ENCODE measurements at regions of chr1 and their contacts with region 1.

Region 1: DNA sequence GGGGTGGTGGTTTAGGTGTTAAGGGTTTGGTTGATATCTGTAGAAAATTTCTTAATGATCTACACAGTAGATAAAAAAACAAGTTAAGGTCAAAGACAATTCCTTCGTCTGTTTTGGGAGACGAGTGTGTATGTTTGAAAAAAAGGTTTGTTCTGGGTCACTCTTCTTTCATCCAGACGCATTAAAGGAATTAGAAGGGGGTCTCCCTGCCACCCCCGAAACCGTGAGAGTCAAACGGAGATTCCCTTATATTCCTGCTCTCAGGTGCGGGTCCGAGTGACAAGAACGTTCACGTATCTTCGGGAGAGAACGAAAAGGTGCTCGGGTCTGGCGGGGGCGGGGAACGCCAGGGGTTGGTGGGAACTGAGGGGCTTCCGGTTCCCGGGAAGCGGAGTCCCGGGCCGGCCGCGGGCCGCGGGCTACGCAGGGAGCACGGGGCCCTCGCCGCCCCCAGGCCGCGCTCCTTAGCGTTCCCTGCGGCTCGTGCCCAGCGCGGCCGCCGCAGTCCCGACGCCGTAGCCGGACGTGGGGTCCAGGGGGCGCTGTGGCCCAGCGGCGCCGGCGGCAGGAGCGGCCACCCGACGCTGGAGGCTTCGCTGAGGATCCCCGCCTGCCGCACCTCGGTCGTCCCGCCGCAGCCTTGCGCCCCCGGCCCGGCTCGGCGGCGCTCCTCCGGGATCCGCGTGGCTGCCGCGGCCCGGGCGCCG is at the start of gene ZFYVE9:
- DNase-seq: peak; percentile 88
- CTCF ChIP-seq: peak; percentile 95

Region 2: DNA sequence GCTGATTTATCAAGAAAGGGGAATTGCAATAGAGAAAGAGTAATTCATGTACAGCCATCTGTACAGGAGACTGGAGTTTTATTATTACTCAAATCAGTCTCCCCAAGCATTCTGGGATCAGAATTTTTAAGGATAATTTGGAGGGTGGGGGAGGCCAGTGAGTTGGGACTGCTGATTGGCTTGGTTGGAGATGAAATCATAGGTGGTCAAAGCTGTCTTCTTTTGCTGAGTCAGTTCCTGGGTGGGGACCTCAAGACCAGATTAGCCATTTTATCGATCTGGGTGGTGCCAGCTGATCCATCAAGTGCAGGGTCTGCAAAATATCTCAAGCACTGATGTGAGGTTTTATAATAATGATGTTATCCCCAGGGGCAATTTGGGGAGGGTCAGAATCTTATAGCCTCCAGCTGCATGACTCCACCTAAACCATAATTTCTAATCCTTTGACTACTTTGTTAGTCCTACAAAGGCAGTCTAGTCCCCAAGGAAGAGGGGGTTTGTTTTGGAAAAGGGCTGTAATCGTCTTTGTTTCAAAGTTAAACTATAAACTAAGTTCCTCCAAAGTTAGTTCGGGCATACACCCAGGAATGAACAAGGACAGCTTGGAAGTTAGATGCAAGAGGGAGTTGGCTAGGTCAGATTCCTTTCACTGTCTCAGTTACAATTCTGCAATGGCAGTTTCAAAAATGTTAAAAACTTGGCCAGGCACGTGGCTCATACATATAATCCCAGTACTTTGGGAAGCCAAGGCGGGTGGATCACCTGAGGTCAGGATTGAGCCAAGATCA is 134.3 kb before region 1 on chr1:
- in situ Hi-C with region 1: no loop called
- DNase-seq: no peak
- CTCF ChIP-seq: no peak

Region 3: GRCh38 chr1:52264530-52265115 is 123.0 kb after region 1 on chr1:
- in situ Hi-C with region 1: no loop called
- DNase-seq: no peak
- CTCF ChIP-seq: no peak

Region 4: DNA sequence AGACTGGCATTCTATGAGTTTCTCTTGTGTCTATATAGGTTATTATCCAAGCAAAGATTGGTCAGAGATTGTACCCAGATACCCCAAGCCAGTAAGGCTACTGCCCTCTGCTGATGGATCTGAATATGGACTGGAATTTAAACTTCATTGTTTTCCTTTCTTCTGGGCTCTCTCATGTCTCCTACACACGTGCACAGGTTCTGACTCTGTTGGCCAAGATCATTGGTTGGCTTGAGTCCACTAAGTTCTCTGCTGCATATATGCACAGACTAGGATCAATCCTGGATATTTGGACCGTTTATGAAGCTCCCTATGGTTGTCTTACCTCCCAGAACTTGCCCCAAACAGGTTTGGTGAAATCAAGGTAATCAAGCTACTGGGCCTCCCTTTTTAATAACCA is 154.7 kb after region 1 on chr1:
- in situ Hi-C with region 1: loop called (anchors 25 kb)
- DNase-seq: peak; percentile 72
- CTCF ChIP-seq: peak; percentile 70

Region 5: GRCh38 chr1:52697795-52698674 is 556.4 kb after region 1 on chr1 and contains the start of gene COA7:
- in situ Hi-C with region 1: loop called (anchors 25 kb)
- DNase-seq: peak; percentile 77
- CTCF ChIP-seq: no peak